GM13976 (cell line): ENCODE measurements at regions of chr11 and their contacts with region 1.

Region 1: DNA sequence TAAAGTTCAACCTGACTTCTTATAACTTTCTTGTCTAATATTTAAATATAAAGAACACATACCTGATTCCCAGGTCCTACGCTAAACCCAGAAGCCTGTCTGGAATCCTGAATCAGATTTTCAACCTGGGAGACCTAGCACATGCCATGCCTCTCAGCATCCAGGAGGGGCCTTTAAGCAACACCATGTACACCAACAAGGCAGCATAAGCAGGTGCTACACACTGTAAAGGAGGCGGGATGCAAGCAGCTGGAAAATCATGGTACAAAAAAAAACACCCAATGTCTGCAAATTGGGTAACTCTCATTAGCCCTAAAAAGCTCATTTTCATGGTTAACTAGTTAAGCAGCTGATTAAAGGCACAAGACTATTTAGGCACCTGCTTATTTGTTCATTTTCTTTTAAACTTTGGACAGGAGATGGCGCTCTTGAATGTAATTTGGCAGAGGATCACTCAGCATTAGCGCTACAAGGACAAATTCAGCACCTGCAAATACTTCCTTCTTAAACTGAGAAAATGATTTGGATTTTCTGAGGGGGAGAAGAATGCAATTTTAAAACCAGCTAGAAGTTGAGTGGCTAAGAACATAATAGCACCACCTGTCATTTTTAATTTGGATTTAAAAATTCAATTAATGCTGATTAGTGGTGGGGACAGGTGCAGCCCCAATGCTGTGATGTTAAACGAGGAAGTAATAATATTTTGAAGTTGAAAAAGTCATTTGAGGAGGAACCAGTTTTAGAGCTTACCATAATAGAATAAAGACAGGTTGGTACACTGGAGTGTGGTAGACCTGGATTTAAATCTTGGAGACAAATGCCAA is 104.0 kb downstream of the FAR1 start:
- DNase-seq: peak; percentile 26
- CTCF ChIP-seq: peak; percentile 42

Region 2: GRCh38 chr11:13297917-13298356 is 474.5 kb before region 1 on chr11:
- in situ Hi-C with region 1: no loop called
- DNase-seq: no peak
- CTCF ChIP-seq: no peak

Region 3: DNA sequence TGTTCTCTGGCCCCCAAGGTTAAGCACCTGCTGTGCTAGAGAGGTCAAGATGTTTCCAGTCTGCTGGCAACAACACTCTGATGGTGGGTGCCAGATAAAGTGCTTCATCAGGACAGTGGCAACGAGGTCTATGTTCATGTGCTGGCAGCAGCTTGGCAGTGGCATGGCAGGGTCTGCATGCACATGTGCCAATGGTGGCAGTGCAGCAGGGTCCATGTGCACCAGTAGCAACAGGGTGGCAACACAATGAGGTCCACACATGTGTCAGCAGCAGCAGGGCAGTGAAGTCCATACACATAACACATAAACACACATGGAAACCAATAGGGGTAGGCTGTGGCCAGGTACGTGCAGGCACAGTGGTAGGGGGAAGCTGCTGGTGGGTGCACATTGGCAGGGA is 152.4 kb before region 1 on chr11:
- in situ Hi-C with region 1: no loop called
- DNase-seq: no peak
- CTCF ChIP-seq: no peak

Region 4: GRCh38 chr11:13680501-13681264 is 91.8 kb before region 1 on chr11:
- in situ Hi-C with region 1: no loop called
- DNase-seq: no peak
- CTCF ChIP-seq: no peak

Region 5: DNA sequence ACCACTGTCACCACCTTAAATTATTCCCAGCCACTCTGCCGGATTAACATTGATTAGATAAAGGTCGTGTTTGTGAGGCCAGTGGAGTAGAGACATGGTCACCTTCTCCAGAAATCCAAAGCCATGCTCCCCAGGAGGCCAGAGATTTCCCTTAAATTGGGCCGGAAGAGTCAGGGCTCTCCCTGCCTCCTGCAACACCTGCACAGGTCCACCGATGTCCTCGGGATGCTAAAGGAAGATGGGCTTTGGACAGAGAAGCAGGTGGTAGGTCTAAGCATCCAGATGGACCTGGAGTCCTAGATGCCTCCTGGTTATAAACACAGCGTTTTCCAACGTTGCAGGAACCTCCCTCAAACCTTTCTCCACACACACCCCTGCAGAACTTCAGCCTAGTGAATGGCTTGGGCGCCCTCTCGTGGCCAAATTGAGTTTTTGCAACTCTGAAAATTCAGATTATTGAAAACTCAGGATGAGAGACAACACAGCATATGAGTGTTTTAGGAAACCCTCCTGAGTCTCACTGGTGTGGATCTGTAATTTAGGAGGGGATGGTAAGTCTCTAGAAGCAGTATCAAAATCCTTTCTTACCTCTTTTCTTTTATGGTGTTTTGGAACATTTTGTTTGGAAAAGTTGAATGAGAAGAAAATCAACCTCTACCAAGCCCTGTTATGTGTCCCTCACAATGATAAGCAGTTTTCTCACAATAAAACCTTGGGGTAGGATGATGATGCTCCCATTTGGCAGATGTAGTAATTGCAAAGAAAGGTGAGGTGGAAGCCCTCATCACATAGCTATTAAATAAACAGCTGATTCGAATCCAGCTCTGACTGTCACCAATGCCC is 476.9 kb after region 1 on chr11:
- in situ Hi-C with region 1: loop called (anchors 10 kb)
- DNase-seq: peak; percentile 60
- CTCF ChIP-seq: peak; percentile 58